Lower leg skin (tissue), 4 donors: ENCODE measurements at regions of chr7 and their contacts with region 1.

Region 1: GRCh38 chr7:71343892-71344291 is 211.9 kb downstream of the GALNT17 start:
- DNase-seq: no peak
- H3K4me3 ChIP-seq: no peak overlapping the region
- CTCF ChIP-seq: no peak
- POLR2A ChIP-seq: no peak

Region 2: GRCh38 chr7:70712942-70713341 is 631.0 kb before region 1 on chr7:
- intact Hi-C with region 1: no loop called
- DNase-seq: no peak
- H3K4me3 ChIP-seq: no peak overlapping the region
- CTCF ChIP-seq: no peak
- POLR2A ChIP-seq: no peak

Region 3: DNA sequence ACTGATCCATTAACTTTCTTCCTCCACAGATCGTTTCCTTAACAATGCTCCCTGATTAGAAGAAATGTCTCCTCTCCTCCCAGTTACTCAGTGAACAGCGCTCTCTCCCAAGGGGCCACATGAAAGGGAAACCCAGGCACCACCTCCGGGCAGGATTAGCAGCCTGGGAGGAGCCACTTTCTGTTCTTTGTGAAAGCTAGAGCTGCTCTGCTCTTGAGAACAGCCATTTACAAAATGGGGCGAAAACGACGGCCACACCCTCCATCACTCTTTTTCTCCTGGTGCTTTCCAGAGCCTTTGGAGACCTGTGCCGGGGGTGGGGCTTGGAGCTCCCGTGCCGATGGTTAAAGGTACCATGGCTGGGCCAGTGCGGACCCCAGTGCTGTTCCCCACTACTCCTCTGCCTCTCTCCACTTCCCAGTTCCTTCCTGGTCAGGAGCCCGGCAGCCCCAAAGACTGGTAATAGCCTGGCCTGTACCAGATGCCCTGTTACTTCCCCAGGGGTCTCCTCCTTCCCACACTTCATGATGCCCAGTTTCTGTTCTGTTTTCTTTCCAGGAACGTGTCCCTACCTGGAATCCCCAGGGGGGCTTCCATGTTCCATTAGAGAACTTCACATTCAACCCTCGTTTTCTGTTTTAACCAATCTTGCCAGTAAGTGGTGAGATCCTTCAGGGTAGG is 614.9 kb before region 1 on chr7:
- intact Hi-C with region 1: no loop called
- DNase-seq: no peak
- H3K4me3 ChIP-seq: no peak overlapping the region
- CTCF ChIP-seq: no peak
- POLR2A ChIP-seq: no peak

Region 4: DNA sequence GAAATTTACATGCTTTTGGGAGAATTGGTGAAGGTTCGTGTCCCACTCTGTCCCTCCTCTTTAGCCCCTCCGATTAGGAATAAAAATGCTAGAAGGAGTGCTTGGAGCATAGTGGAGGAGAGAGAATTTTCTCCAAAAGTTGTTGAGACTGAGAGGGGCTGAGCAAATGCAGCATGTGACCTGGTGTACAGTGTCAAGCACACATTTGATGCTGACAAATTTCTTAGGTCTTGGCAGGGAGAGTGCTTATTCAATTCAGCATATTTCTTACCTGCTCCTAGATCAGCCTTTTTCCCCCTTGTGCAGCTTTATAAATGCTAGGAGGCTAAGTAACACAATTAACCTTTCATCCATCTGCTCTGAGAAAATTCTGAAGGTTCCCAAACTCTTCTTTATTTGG is 23.0 kb before region 1 on chr7:
- intact Hi-C with region 1: loop called (anchors 2 kb)
- DNase-seq: no peak
- H3K4me3 ChIP-seq: no peak overlapping the region
- CTCF ChIP-seq: no peak
- POLR2A ChIP-seq: no peak